ENCODE measurements at regions of chr19 and their contacts with region 1.

Region 1: GRCh38 chr19:17069218-17069617 is 6.0 kb downstream of the HAUS8 start:
- DNase-seq: no peak
- H3K4me3 ChIP-seq: no peak overlapping the region
- H3K27ac ChIP-seq: no peak overlapping the region
- H3K4me1 ChIP-seq: peaks cover 4 to 18% (median 10%) of the 10 kb centered on the region in 4 donors
- H3K27me3 ChIP-seq: no peaks in the 10 kb centered on the region
- CTCF ChIP-seq: no peak
- EP300 ChIP-seq: no peak
- POLR2A ChIP-seq: no peak

Region 2: GRCh38 chr19:17156927-17157302 is 87.7 kb after region 1 on chr19:
- intact Hi-C with region 1: loop called (anchors 10 kb)
- DNase-seq: no peak
- H3K4me3 ChIP-seq: no peak overlapping the region
- H3K27ac ChIP-seq: peak overlapping the region in 3 of 5 donors; percentile 13 to 44 (median 38)
- H3K4me1 ChIP-seq: no peaks in the 10 kb centered on the region
- H3K27me3 ChIP-seq: no peaks in the 10 kb centered on the region
- CTCF ChIP-seq: no peak
- EP300 ChIP-seq: no peak
- POLR2A ChIP-seq: no peak

Measured in stomach (tissue), 19 donors.